Heart left ventricle (tissue), 16 donors: ENCODE measurements at regions of chr5 and their contacts with region 1.

Region 1: GRCh38 chr5:1090538-1090937 is 21.3 kb downstream of the SLC12A7 start:
- DNase-seq: peak; percentile 63 to 83 (median 74)
- ATAC-seq: peak; percentile 1 to 52 (median 28)
- H3K4me3 ChIP-seq: no peak overlapping the region
- H3K27ac ChIP-seq: peak overlapping the region; percentile 31 to 81 (median 53)
- H3K4me1 ChIP-seq: peaks cover 0 to 56% (median 29%) of the 10 kb centered on the region in 12 donors
- H3K27me3 ChIP-seq: no peaks in the 10 kb centered on the region
- CTCF ChIP-seq: no peak
- POLR2A ChIP-seq: no peak

Region 2: GRCh38 chr5:945691-946551 is 144.6 kb before region 1 on chr5:
- intact Hi-C with region 1: no loop called
- DNase-seq: no peak
- ATAC-seq: peak in 3 of 4 donors; percentile 23 to 40 (median 29)
- H3K4me3 ChIP-seq: no peak overlapping the region
- H3K27ac ChIP-seq: no peak overlapping the region
- H3K4me1 ChIP-seq: peaks cover 0 to 15% (median 0%) of the 10 kb centered on the region in 12 donors
- H3K27me3 ChIP-seq: peaks cover 0 to 52% (median 17%) of the 10 kb centered on the region in 9 donors
- CTCF ChIP-seq: no peak
- POLR2A ChIP-seq: no peak

Region 3: GRCh38 chr5:1052641-1053390 is 37.7 kb before region 1 on chr5:
- intact Hi-C with region 1: loop called in 1 of 10 experiments (anchors 5 kb)
- DNase-seq: peak in 4 of 5 donors; percentile 57 to 73 (median 68)
- ATAC-seq: peak; percentile 44 to 72 (median 49)
- H3K4me3 ChIP-seq: no peak overlapping the region
- H3K27ac ChIP-seq: peak overlapping the region in 9 of 12 donors; percentile 31 to 77 (median 62)
- H3K4me1 ChIP-seq: peaks cover 0 to 31% (median 13%) of the 10 kb centered on the region in 12 donors
- H3K27me3 ChIP-seq: no peaks in the 10 kb centered on the region
- CTCF ChIP-seq: peak in 7 of 12 donors; percentile 3 to 25 (median 22)
- POLR2A ChIP-seq: no peak

Region 4: GRCh38 chr5:1125030-1125357 is 34.5 kb after region 1 on chr5:
- intact Hi-C with region 1: loop called in 2 of 10 experiments (anchors 5 kb)
- DNase-seq: peak in 4 of 5 donors; percentile 79 to 90 (median 84)
- ATAC-seq: peak; percentile 61 to 73 (median 64)
- H3K4me3 ChIP-seq: peak overlapping the region in 3 of 12 donors; percentile 4 to 34 (median 11)
- H3K27ac ChIP-seq: peak overlapping the region; percentile 46 to 96 (median 86)
- H3K4me1 ChIP-seq: peaks cover 3 to 88% (median 58%) of the 10 kb centered on the region in 12 donors
- H3K27me3 ChIP-seq: no peaks in the 10 kb centered on the region
- CTCF ChIP-seq: no peak
- POLR2A ChIP-seq: no peak